HEK293T (cell line): ENCODE measurements at regions of chr11 and their contacts with region 1.

Region 1: DNA sequence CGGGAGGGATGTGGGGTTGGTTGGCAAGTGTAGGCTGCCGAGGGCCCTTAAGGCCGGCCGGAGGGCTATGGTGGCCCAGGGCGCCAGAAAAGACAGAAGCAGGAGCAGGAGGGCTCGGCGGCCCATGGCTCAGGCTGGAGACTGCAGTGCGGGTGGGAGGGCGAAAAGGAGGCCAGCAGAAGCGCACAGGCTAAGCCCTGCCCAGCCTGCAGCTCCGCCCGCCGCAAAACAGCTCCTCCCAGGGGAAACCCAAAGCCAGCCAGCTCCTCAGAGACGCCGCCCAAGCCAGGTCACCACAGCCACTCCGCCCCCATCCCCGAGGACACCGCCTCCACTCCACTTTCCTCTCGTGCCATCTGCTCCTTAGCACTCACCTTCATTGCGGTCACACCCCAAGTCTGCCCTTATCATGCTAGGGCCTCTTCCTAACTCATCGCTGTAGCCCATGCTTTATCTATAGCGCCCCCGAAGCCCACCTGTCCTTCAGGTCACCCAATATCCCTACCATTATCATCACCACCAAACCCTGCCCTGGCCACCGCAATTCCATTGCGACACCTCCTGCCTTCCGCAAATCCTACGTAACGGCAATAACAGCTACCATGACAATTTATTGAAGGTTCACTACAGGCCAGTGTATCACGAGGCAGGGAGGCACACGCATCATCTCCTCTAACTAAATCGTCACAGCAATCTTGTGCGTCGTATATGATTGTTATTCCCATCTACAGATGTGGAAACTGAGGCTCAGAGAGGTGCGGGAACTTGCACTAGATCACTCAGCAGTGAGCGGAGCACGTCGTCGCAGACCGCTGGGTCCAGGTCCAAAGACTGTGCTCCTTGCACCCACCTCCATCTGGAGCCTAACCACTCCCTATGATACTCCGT is at the start of gene PRCP:
- DNase-seq: peak; percentile 87

Region 2: GRCh38 chr11:82802710-82803109 is 97.8 kb before region 1 on chr11:
- CTCF ChIA-PET with region 1: no interaction called
- POLR2A ChIA-PET with region 1: no interaction called
- DNase-seq: no peak

Region 3: GRCh38 chr11:82867495-82868082 is 32.9 kb before region 1 on chr11:
- CTCF ChIA-PET with region 1: interaction called, 10 read pairs
- POLR2A ChIA-PET with region 1: interaction called, 8 read pairs
- DNase-seq: peak; percentile 62

Region 4: DNA sequence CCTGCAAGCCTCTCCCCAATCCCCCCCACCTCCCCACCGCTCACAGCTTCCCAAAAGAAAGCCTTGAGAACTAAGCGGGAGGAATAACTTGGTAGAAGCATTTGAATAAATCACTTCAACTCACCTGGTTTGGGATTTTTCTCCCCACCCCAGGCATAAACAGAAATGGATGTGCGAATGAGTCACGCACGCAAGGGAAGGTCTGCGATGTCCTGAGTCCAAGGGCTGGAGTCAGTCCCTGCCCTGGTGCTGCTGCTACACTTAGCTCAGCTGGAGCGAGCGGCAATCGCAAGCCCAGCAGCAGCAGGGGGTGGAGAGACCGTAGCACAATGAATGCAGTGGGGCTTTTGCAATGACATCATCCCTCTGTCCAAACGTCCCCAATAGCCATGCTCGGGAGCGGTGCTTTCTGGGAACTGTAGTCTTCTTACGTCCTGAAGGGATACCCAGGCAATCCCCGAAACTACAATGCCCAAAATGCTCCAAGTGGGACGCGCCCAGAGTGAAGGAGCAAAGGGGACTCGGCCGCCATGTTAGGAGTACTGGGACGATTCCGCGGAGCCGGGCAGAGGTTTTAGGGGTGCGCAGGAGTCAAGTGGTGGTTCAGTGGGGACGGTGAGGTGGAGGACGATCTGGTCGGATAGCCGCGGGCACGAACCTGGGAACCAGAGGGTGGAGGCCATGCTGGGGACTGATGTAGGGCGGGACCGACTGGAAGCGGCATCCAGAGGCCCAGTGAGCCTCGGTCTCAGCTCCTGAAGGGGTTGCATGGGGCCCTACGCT is 171.2 kb after region 1 on chr11 and contains the start of gene RAB30:
- CTCF ChIA-PET with region 1: interaction called, 3 read pairs
- POLR2A ChIA-PET with region 1: interaction called, 10 read pairs
- DNase-seq: peak; percentile 95

Region 5: DNA sequence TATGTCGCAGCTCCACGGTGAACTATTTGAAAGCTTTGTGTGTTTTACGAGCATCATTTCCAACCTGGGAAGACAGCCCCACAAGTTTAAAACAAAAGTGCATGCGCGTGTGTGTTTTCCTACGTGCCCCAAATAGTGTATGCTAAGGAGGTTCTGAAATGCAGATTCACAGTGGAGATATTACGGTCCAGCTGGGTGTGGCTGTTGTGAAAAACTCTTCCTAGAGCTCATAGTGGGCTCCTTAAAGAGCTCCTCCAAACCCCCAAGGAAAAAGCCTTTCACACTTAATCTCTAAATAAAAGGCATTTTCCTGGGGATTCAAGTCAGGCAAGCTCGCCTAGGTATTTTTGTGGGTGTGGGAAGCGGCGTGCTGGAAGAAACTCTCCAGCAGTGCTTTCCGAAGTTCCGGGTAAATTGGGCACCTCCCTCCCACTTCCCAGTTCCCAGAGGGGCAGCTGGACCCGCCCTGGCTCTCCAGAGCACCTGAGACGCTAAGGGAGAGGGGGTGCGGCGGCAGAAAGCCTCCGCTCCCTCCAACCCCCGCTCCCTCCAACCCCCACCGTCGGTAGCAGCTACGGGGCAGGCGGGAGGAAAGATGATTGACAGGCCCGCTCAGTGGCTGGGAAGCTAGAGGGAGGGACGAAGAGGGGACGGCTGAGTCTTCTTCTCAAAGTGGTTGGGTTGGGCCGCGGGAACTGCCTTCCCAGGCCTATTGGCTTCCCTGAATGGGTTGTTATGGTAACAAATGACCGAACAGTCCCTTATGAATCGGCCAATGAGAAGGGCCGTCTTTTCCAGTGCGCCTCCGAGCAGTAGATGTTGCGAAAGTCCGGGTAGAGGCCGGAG is 255.9 kb after region 1 on chr11:
- CTCF ChIA-PET with region 1: no interaction called
- POLR2A ChIA-PET with region 1: interaction called, 18 read pairs
- DNase-seq: peak; percentile 94